ENCODE measurements at regions of chr2 and their contacts with region 1.

Region 1: DNA sequence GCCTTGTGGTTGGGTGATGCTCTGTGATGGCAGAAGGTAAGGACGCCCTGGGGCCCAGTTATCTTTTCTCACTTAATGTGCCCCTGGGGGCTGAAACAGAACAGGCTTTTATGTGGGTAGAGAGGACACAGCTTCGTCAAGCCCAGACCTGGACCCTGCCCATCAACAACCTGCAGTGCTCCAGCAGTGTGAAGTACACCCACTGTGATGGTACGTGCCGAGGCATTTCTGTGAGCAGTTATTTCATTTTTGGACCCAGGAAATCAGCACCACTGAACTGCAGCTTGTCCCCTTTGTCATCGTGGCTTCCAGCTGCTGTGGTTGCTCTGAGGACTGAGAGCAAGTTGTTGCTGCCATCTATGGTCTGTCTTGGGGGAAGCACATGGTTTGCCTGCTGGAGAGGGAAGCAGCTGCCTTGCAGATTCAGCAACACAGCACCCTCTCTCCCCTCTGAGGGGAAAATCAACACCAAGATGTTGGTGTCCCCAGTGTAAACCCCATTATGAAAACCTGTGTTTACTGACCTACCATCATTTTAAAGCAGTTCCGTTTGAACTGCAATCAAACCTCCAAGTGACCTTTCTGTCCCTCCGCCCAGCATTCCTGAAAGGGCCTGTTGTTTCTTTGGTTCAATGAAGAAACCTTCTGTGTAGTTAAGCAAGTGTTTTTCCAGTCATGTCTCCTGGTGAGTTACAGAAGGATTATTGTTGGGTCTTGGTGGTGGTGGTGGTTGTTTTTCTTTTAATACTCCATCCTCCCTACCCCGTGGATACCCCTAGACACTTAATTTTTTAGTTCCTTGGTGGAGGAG is 158.2 kb downstream of the MGAT5 start:
- DNase-seq: peak; percentile 27 to 83 (median 70)
- ATAC-seq: peak; percentile 95
- H3K4me3 ChIP-seq: no peak overlapping the region
- H3K4me3 Mint-ChIP-seq: no peak overlapping the region
- H3K27ac ChIP-seq: no peak overlapping the region
- H3K27ac Mint-ChIP-seq: peak overlapping the region in 6 of 9 donors; percentile 6 to 63 (median 40)
- H3K4me1 ChIP-seq: peaks cover 6 to 17% of the 10 kb centered on the region in 2 donors
- H3K4me1 Mint-ChIP-seq: peaks cover 17 to 47% (median 38%) of the 10 kb centered on the region in 7 donors
- H3K27me3 ChIP-seq: no peaks in the 10 kb centered on the region
- H3K27me3 Mint-ChIP-seq: no peaks in the 10 kb centered on the region

Region 2: GRCh38 chr2:133886735-133887660 is 525.0 kb before region 1 on chr2:
- CTCF ChIA-PET with region 1: interaction called, 6 read pairs
- POLR2A ChIA-PET with region 1: no interaction called
- intact Hi-C with region 1: loop called (anchors 1 kb)
- DNase-seq: peak in 7 of 9 donors; percentile 11 to 44 (median 33)
- ATAC-seq: no peak
- H3K4me3 ChIP-seq: no peak overlapping the region
- H3K4me3 Mint-ChIP-seq: no peak overlapping the region
- H3K27ac ChIP-seq: no peak overlapping the region
- H3K27ac Mint-ChIP-seq: peak overlapping the region in 1 of 9 donors; percentile 68
- H3K4me1 ChIP-seq: no peaks in the 10 kb centered on the region
- H3K4me1 Mint-ChIP-seq: peaks cover 0 to 2% (median 0%) of the 10 kb centered on the region in 7 donors
- H3K27me3 ChIP-seq: no peaks in the 10 kb centered on the region
- H3K27me3 Mint-ChIP-seq: peaks cover 4 to 12% (median 6%) of the 10 kb centered on the region in 5 donors

Region 3: GRCh38 chr2:134079373-134079772 is 332.7 kb before region 1 on chr2:
- CTCF ChIA-PET with region 1: no interaction called
- POLR2A ChIA-PET with region 1: no interaction called
- intact Hi-C with region 1: no loop called
- DNase-seq: no peak
- ATAC-seq: no peak
- H3K4me3 ChIP-seq: no peak overlapping the region
- H3K4me3 Mint-ChIP-seq: no peak overlapping the region
- H3K27ac ChIP-seq: no peak overlapping the region
- H3K27ac Mint-ChIP-seq: no peak overlapping the region
- H3K4me1 ChIP-seq: no peaks in the 10 kb centered on the region
- H3K4me1 Mint-ChIP-seq: no peaks in the 10 kb centered on the region
- H3K27me3 ChIP-seq: no peaks in the 10 kb centered on the region
- H3K27me3 Mint-ChIP-seq: peaks cover 0 to 23% (median 9%) of the 10 kb centered on the region in 5 donors

Region 4: GRCh38 chr2:134207564-134208209 is 204.3 kb before region 1 on chr2:
- CTCF ChIA-PET with region 1: interaction called, 10 read pairs
- POLR2A ChIA-PET with region 1: no interaction called
- intact Hi-C with region 1: loop called (anchors 5 kb)
- DNase-seq: peak; percentile 39 to 62 (median 53)
- ATAC-seq: peak; percentile 92
- H3K4me3 ChIP-seq: no peak overlapping the region
- H3K4me3 Mint-ChIP-seq: no peak overlapping the region
- H3K27ac ChIP-seq: no peak overlapping the region
- H3K27ac Mint-ChIP-seq: peak overlapping the region in 1 of 9 donors; percentile 53
- H3K4me1 ChIP-seq: peaks cover 21 to 34% of the 10 kb centered on the region in 2 donors
- H3K4me1 Mint-ChIP-seq: peaks cover 5 to 17% (median 11%) of the 10 kb centered on the region in 7 donors
- H3K27me3 ChIP-seq: no peaks in the 10 kb centered on the region
- H3K27me3 Mint-ChIP-seq: no peaks in the 10 kb centered on the region

Region 5: DNA sequence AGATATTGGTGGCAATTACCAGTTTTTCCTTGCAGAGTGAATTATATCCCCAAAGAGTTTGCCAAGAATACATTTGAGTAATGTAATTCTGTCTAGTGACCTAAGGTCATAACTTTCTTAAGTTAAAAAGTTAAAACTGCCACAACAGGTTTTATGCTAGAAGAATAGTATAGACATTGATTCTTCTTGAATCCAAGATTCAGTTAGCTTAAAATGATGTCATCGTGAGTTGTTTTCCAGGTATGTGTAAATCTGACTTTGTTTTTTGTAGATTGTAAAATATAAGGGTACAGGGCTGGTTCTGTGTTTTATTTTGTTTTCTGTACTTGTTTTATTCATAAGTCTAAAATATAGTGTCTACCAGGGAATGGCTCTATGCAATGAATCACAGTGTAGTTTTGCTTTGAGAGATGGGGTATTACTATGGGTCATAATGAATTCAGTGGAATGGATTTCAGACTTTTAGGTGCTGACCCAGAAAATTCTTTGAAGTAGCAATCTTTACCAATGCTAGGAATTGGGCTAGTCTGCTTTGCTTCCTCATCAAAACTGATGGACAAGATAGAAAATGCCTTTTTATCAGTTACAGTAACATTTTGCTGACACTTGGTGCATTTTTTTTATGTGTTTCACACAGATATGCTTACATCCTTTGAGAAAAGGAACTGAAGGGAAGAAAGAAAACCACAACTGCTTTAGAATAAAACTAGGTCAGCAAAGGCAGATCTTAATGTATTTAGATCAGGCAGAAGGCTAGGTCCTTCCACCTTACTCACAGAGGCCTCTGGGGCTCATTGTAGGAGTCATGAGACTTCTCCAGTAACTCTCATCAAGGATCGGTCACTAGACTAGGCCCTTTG is 178.9 kb before region 1 on chr2:
- CTCF ChIA-PET with region 1: no interaction called
- POLR2A ChIA-PET with region 1: no interaction called
- intact Hi-C with region 1: loop called in 1 of 2 experiments (anchors 5 kb)
- DNase-seq: peak in 7 of 9 donors; percentile 13 to 68 (median 57)
- ATAC-seq: peak; percentile 84
- H3K4me3 ChIP-seq: peak overlapping the region; percentile 17
- H3K4me3 Mint-ChIP-seq: peak overlapping the region; percentile 29 to 81 (median 64)
- H3K27ac ChIP-seq: peak overlapping the region; percentile 37
- H3K27ac Mint-ChIP-seq: peak overlapping the region; percentile 62 to 87 (median 76)
- H3K4me1 ChIP-seq: peaks cover 56 to 59% of the 10 kb centered on the region in 2 donors
- H3K4me1 Mint-ChIP-seq: peaks cover 57 to 80% (median 75%) of the 10 kb centered on the region in 7 donors
- H3K27me3 ChIP-seq: no peaks in the 10 kb centered on the region
- H3K27me3 Mint-ChIP-seq: no peaks in the 10 kb centered on the region

Region 6: GRCh38 chr2:134401081-134401497 is 10.9 kb before region 1 on chr2:
- CTCF ChIA-PET with region 1: interaction called, 12 read pairs
- POLR2A ChIA-PET with region 1: no interaction called
- intact Hi-C with region 1: no loop called
- DNase-seq: no peak
- ATAC-seq: no peak
- H3K4me3 ChIP-seq: no peak overlapping the region
- H3K4me3 Mint-ChIP-seq: no peak overlapping the region
- H3K27ac ChIP-seq: no peak overlapping the region
- H3K27ac Mint-ChIP-seq: peak overlapping the region in 2 of 9 donors; percentile 28 to 78
- H3K4me1 ChIP-seq: no peaks in the 10 kb centered on the region
- H3K4me1 Mint-ChIP-seq: peaks cover 0 to 10% (median 2%) of the 10 kb centered on the region in 7 donors
- H3K27me3 ChIP-seq: no peaks in the 10 kb centered on the region
- H3K27me3 Mint-ChIP-seq: no peaks in the 10 kb centered on the region